Prostate gland (tissue), 2 donors: ENCODE measurements at regions of chr2 and their contacts with region 1.

Region 1: DNA sequence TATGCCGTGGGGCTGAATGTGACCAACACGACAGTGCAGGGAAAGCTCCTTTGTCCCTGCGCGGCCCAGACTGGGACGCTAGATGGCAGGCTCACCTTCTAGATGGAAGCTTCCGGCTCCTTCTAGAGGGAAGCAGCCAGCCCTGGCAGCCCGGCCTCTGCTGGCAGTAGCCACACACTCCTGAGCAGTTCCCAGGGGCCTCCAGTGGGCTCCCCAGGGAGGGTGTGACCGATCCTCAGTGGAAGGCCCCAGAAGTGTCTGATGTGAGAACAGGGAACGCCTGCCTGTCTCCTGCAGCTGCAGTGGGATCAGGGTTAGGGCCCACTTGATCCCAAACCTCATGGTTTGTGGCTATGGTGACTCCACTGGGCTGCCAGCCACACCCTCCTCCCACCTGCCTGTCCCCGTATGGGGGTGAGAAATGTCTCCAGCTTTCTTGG is 48.5 kb upstream of the LRPPRC start:
- DNase-seq: peak; percentile 72
- H3K4me3 ChIP-seq: no peak overlapping the region
- H3K27ac ChIP-seq: no peak overlapping the region
- H3K4me1 ChIP-seq: no peaks in the 10 kb centered on the region
- H3K27me3 ChIP-seq: no peaks in the 10 kb centered on the region
- CTCF ChIP-seq: peak; percentile 37 to 89 (median 76)
- POLR2A ChIP-seq: no peak

Region 2: GRCh38 chr2:44250376-44250775 is 206.1 kb after region 1 on chr2:
- intact Hi-C with region 1: no loop called
- DNase-seq: no peak
- H3K4me3 ChIP-seq: no peak overlapping the region
- H3K27ac ChIP-seq: no peak overlapping the region
- H3K4me1 ChIP-seq: no peaks in the 10 kb centered on the region
- H3K27me3 ChIP-seq: no peaks in the 10 kb centered on the region
- CTCF ChIP-seq: no peak
- POLR2A ChIP-seq: no peak

Region 3: GRCh38 chr2:44291281-44292248 is 247.3 kb after region 1 on chr2:
- intact Hi-C with region 1: loop called (anchors 5 kb)
- DNase-seq: peak; percentile 75
- H3K4me3 ChIP-seq: no peak overlapping the region
- H3K27ac ChIP-seq: peak overlapping the region in 1 of 2 donors; percentile 29
- H3K4me1 ChIP-seq: no peaks in the 10 kb centered on the region
- H3K27me3 ChIP-seq: no peaks in the 10 kb centered on the region
- CTCF ChIP-seq: peak in 3 of 4 experiments; percentile 60 to 82 (median 76)
- POLR2A ChIP-seq: no peak

Region 4: DNA sequence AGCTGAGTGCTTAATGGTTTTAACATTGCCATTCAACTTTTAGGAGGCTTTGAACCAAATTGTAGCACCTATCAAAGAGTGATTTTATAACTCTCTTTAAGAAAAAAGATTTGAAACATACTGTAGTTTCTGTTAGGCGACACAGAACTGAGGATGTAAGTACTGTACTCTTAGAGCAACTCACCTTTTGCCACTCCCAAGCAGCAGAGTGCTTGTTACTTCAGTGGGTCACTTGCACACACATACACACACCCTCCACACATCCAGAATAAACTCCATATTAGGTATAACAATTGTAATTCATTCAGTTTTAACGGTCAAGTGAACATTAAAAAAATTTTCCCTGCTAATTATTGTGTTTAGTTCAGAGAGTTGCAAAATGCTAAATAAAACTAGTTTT is 435.8 kb after region 1 on chr2:
- intact Hi-C with region 1: loop called (anchors 10 kb)
- DNase-seq: no peak
- H3K4me3 ChIP-seq: no peak overlapping the region
- H3K27ac ChIP-seq: no peak overlapping the region
- H3K4me1 ChIP-seq: no peaks in the 10 kb centered on the region
- H3K27me3 ChIP-seq: no peaks in the 10 kb centered on the region
- CTCF ChIP-seq: no peak
- POLR2A ChIP-seq: no peak